AG04450 (cell line): ENCODE measurements at regions of chr1 and their contacts with region 1.

Region 1: GRCh38 chr1:61049850-61050540 is 32.4 kb upstream of the NFIA start:
- DNase-seq: peak; percentile 46
- H3K4me3 ChIP-seq: peak overlapping the region; percentile 64
- H3K27ac ChIP-seq: no peak overlapping the region
- H3K27me3 ChIP-seq: peaks cover 41% of the 10 kb centered on the region
- CTCF ChIP-seq: peak; percentile 97

Region 2: GRCh38 chr1:60765204-60765603 is 284.8 kb before region 1 on chr1:
- CTCF ChIA-PET with region 1: no interaction called
- POLR2A ChIA-PET with region 1: no interaction called
- DNase-seq: no peak
- H3K4me3 ChIP-seq: no peak overlapping the region
- H3K27ac ChIP-seq: no peak overlapping the region
- H3K27me3 ChIP-seq: no peaks in the 10 kb centered on the region
- CTCF ChIP-seq: peak; percentile 47

Region 3: DNA sequence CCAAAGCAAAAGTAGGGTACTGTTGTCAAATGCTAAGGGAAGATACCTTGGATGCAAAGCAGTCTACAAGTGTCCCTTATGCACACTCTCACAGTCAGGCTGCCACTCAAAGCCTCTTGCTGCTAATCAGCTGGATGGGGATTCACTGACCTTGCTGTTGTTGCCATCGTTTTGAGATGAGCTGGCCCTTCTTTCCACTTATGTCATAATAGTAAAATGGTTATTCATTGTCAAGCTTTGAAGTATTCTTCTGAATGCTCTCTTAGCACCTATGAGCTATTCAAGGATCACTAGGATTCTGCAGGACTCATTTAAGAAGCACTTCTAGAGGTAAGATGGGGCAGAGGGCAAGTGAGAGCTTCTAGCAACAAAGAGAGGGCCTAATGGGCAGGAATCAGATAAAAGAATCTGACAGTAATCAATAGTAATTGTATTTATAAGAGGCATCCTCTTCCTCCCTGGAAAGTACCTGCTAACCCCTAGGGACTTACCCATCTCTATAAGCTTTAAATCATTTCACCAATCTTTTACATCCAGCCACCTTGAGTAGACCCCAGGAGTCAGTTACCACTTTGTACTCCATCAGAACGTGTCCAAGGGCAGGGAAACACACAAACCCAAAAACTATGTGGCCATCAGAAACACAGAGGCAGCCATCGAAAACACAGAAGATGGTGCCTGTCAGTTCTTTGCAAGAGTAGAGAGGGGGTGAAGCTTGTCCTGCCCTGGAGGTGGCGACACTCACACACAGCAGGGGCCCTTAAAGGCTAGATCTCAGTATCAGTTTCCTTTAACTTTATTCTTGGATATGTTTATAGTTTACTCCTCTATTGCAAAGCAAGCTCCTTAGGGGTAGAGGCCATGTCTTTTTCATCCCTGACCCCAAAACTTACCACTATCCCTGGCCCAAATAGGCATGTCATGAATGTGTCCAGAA is 71.3 kb before region 1 on chr1:
- CTCF ChIA-PET with region 1: interaction called, 22 read pairs
- POLR2A ChIA-PET with region 1: no interaction called
- DNase-seq: no peak
- H3K4me3 ChIP-seq: no peak overlapping the region
- H3K27ac ChIP-seq: no peak overlapping the region
- H3K27me3 ChIP-seq: no peaks in the 10 kb centered on the region
- CTCF ChIP-seq: peak; percentile 79

Region 4: GRCh38 chr1:61084491-61085031 is 34.6 kb after region 1 on chr1:
- CTCF ChIA-PET with region 1: interaction called, 49 read pairs
- POLR2A ChIA-PET with region 1: interaction called, 3 read pairs
- DNase-seq: no peak
- H3K4me3 ChIP-seq: no peak overlapping the region
- H3K27ac ChIP-seq: no peak overlapping the region
- H3K27me3 ChIP-seq: no peaks in the 10 kb centered on the region
- CTCF ChIP-seq: no peak

Region 5: DNA sequence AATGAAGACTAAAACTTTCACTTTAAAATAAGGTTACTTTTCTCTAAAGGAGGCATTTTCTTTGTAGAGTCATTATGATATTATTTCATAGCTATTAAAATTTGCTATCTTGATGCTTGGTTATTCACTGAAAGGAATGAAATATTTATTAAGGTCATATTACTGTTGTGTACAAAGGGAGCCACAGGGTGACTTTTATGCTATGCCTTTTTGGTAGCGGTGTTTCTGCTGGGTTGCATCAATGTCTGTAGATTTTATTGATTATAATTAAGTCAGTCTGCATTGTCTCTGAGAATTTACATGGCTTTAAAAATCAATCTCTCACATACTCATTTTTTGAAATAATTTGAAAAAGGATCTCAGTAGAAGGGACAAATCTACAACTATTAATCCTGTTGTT is 117.3 kb after region 1 on chr1:
- CTCF ChIA-PET with region 1: interaction called, 17 read pairs
- POLR2A ChIA-PET with region 1: no interaction called
- DNase-seq: no peak
- H3K4me3 ChIP-seq: no peak overlapping the region
- H3K27ac ChIP-seq: no peak overlapping the region
- H3K27me3 ChIP-seq: no peaks in the 10 kb centered on the region
- CTCF ChIP-seq: no peak

Region 6: GRCh38 chr1:61453111-61453961 is 403.3 kb after region 1 on chr1:
- CTCF ChIA-PET with region 1: interaction called, 58 read pairs
- POLR2A ChIA-PET with region 1: no interaction called
- DNase-seq: peak; percentile 71
- H3K4me3 ChIP-seq: no peak overlapping the region
- H3K27ac ChIP-seq: no peak overlapping the region
- H3K27me3 ChIP-seq: no peaks in the 10 kb centered on the region
- CTCF ChIP-seq: peak; percentile 93